Adrenal gland (tissue), 19 donors: ENCODE measurements at regions of chr9 and their contacts with region 1.

Region 1: GRCh38 chr9:21395778-21396717 is 10.8 kb upstream of the IFNA2 start:
- DNase-seq: peak in 6 of 7 donors; percentile 38 to 59 (median 44)
- H3K4me3 ChIP-seq: peak overlapping the region in 2 of 4 donors; percentile 31 to 54
- H3K27ac ChIP-seq: no peak overlapping the region
- H3K4me1 ChIP-seq: peaks cover 0 to 9% of the 10 kb centered on the region in 2 donors
- H3K27me3 ChIP-seq: peaks cover 43% of the 10 kb centered on the region
- CTCF ChIP-seq: peak; percentile 56 to 76 (median 67)
- POLR2A ChIP-seq: no peak

Region 2: DNA sequence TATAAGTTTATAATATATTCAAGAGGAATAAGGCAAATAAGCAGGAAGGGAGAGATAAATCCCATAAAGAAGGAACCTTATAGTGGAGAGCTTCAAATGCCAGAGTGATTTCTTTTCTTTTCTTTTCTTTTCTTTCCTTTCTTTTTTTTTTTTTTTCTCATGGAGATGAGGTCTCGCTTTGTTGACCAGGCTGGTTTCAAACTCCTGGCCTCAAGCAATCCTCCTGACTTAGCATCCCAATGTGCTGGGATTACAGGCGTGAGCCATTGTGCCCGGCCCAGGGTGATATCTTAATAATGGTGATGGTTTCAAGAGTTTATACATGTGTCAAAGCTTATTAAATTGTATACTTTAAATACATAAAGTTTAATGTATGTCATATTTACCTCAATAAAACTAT is 731.5 kb before region 1 on chr9:
- intact Hi-C with region 1: no loop called
- DNase-seq: no peak
- H3K4me3 ChIP-seq: no peak overlapping the region
- H3K27ac ChIP-seq: no peak overlapping the region
- H3K4me1 ChIP-seq: no peaks in the 10 kb centered on the region
- H3K27me3 ChIP-seq: no peaks in the 10 kb centered on the region
- CTCF ChIP-seq: no peak
- POLR2A ChIP-seq: no peak

Region 3: GRCh38 chr9:21326526-21327139 is 69.4 kb before region 1 on chr9:
- intact Hi-C with region 1: loop called (anchors 5 to 10 kb)
- DNase-seq: no peak
- H3K4me3 ChIP-seq: no peak overlapping the region
- H3K27ac ChIP-seq: no peak overlapping the region
- H3K4me1 ChIP-seq: peaks cover 9 to 25% of the 10 kb centered on the region in 2 donors
- H3K27me3 ChIP-seq: no peaks in the 10 kb centered on the region
- CTCF ChIP-seq: peak; percentile 49 to 74 (median 60)
- POLR2A ChIP-seq: no peak